Calu3 (cell line): ENCODE measurements at regions of chr12 and their contacts with region 1.

Region 1: GRCh38 chr12:42362647-42363260 is 36.8 kb downstream of the PPHLN1 start:
- DNase-seq: no peak
- H3K4me3 Mint-ChIP-seq: no peak overlapping the region
- H3K27ac Mint-ChIP-seq: no peak overlapping the region
- H3K4me1 Mint-ChIP-seq: no peaks in the 10 kb centered on the region
- H3K27me3 Mint-ChIP-seq: no peaks in the 10 kb centered on the region
- CTCF ChIP-seq: no peak

Region 2: GRCh38 chr12:42308390-42308789 is 54.4 kb before region 1 on chr12:
- CTCF ChIA-PET with region 1: no interaction called
- intact Hi-C with region 1: no loop called
- DNase-seq: no peak
- H3K4me3 Mint-ChIP-seq: no peak overlapping the region
- H3K27ac Mint-ChIP-seq: no peak overlapping the region
- H3K4me1 Mint-ChIP-seq: no peaks in the 10 kb centered on the region
- H3K27me3 Mint-ChIP-seq: no peaks in the 10 kb centered on the region
- CTCF ChIP-seq: no peak

Region 3: DNA sequence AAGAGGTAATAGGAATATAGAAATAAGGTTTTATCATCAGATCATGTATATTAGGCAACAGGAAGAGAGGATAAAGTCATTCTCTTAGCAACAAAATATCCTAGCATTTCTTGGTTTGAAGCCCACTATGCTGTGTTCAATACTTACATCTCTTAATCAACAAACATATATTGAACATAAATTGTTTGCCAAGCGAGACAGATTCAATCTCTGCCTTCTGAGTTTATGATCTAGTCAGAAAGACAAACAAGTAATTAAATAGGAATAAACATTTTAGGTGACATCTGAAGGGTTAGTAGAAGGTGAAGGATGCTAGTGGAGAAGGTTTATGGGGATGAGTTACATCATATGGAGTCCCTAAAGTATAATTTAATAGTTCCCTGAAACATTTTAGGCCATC is 18.0 kb after region 1 on chr12:
- CTCF ChIA-PET with region 1: no interaction called
- intact Hi-C with region 1: loop called (anchors 1 kb)
- DNase-seq: no peak
- H3K4me3 Mint-ChIP-seq: no peak overlapping the region
- H3K27ac Mint-ChIP-seq: no peak overlapping the region
- H3K4me1 Mint-ChIP-seq: no peaks in the 10 kb centered on the region
- H3K27me3 Mint-ChIP-seq: no peaks in the 10 kb centered on the region
- CTCF ChIP-seq: no peak

Region 4: GRCh38 chr12:42666671-42667243 is 304.0 kb after region 1 on chr12:
- CTCF ChIA-PET with region 1: no interaction called
- intact Hi-C with region 1: no loop called
- DNase-seq: peak; percentile 28
- H3K4me3 Mint-ChIP-seq: no peak overlapping the region
- H3K27ac Mint-ChIP-seq: no peak overlapping the region
- H3K4me1 Mint-ChIP-seq: no peaks in the 10 kb centered on the region
- H3K27me3 Mint-ChIP-seq: no peaks in the 10 kb centered on the region
- CTCF ChIP-seq: no peak